ENCODE measurements at regions of chr19 and their contacts with region 1.

Region 1: GRCh38 chr19:8412783-8413628 is at the start of gene MARCHF2:
- DNase-seq: peak; percentile 99
- ATAC-seq: peak; percentile 100
- H3K4me3 ChIP-seq: peak within 1 kb of the TSS; percentile 79
- H3K27ac ChIP-seq: no peak within 1 kb of the TSS
- H3K4me1 ChIP-seq: peaks cover 6% of the 10 kb centered on the region
- H3K27me3 ChIP-seq: no peaks in the 10 kb centered on the region
- CTCF ChIP-seq: peak; percentile 68
- total RNA-seq, gene MARCHF2: 58.6 and 58.7 TPM in 2 replicates

Region 2: DNA sequence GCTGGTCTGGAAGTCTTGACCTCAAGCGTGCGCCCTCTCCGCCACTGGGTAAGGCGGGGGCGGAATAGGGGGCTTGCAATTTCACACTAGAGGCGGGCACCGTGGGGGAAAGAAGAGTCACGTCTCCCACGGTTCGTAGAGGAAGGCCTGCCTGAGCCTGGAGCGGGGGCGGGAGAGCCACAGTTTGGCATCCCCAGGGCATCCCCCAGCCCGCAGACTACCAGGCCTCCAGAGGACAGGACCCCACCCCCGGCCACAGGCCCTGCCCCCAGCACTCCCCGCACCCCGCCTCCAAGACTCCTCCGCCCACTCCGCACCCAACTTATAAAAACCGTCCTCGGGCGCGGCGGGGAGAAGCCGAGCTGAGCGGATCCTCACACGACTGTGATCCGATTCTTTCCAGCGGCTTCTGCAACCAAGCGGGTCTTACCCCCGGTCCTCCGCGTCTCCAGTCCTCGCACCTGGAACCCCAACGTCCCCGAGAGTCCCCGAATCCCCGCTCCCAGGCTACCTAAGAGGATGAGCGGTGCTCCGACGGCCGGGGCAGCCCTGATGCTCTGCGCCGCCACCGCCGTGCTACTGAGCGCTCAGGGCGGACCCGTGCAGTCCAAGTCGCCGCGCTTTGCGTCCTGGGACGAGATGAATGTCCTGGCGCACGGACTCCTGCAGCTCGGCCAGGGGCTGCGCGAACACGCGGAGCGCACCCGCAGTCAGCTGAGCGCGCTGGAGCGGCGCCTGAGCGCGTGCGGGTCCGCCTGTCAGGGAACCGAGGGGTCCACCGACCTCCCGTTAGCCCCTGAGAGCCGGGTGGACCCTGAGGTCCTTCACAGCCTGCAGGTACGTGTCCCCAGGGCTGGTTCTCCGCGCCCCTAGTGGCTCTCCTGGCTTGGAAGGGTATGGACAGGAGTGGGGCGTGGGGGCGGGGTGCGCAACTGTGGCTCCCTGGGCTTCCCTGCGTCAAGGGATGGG is 48.9 kb before region 1 on chr19 and contains the start of gene ANGPTL4:
- CTCF ChIA-PET with region 1: no interaction called
- POLR2A ChIA-PET with region 1: interaction called, 15 read pairs
- intact Hi-C with region 1: no loop called
- DNase-seq: peak; percentile 79
- ATAC-seq: peak; percentile 52
- H3K4me3 ChIP-seq: peak within 1 kb of the TSS; percentile 84
- H3K27ac ChIP-seq: peak within 1 kb of the TSS; percentile 35
- H3K4me1 ChIP-seq: peaks cover 40% of the 10 kb centered on the region
- H3K27me3 ChIP-seq: no peaks in the 10 kb centered on the region
- CTCF ChIP-seq: peak; percentile 44
- total RNA-seq, gene ANGPTL4: 6.7 and 10.7 TPM in 2 replicates

Region 3: GRCh38 chr19:8444645-8445487 is 31.9 kb after region 1 on chr19 and contains the start of gene HNRNPM:
- CTCF ChIA-PET with region 1: interaction called, 12 read pairs
- POLR2A ChIA-PET with region 1: interaction called, 10 read pairs
- intact Hi-C with region 1: no loop called
- DNase-seq: peak; percentile 100
- ATAC-seq: peak; percentile 88
- H3K4me3 ChIP-seq: peak within 1 kb of the TSS; percentile 88
- H3K27ac ChIP-seq: peak within 1 kb of the TSS; percentile 63
- H3K4me1 ChIP-seq: peaks cover 30% of the 10 kb centered on the region
- H3K27me3 ChIP-seq: no peaks in the 10 kb centered on the region
- CTCF ChIP-seq: no peak
- total RNA-seq, gene HNRNPM: 165 and 287 TPM in 2 replicates

Region 4: GRCh38 chr19:8468761-8469373 is 55.9 kb after region 1 on chr19:
- CTCF ChIA-PET with region 1: no interaction called
- POLR2A ChIA-PET with region 1: no interaction called
- intact Hi-C with region 1: no loop called
- DNase-seq: no peak
- ATAC-seq: no peak
- H3K4me3 ChIP-seq: no peak overlapping the region
- H3K27ac ChIP-seq: no peak overlapping the region
- H3K4me1 ChIP-seq: no peaks in the 10 kb centered on the region
- H3K27me3 ChIP-seq: no peaks in the 10 kb centered on the region
- CTCF ChIP-seq: no peak

Region 5: GRCh38 chr19:8487137-8487851 is 74.3 kb after region 1 on chr19:
- CTCF ChIA-PET with region 1: no interaction called
- POLR2A ChIA-PET with region 1: no interaction called
- intact Hi-C with region 1: no loop called
- DNase-seq: no peak
- ATAC-seq: no peak
- H3K4me3 ChIP-seq: no peak overlapping the region
- H3K27ac ChIP-seq: no peak overlapping the region
- H3K4me1 ChIP-seq: no peaks in the 10 kb centered on the region
- H3K27me3 ChIP-seq: no peaks in the 10 kb centered on the region
- CTCF ChIP-seq: no peak

Region 6: GRCh38 chr19:8505680-8506401 is 92.8 kb after region 1 on chr19:
- CTCF ChIA-PET with region 1: interaction called, 15 read pairs
- POLR2A ChIA-PET with region 1: interaction called, 4 read pairs
- intact Hi-C with region 1: loop called (anchors 2 kb)
- DNase-seq: peak; percentile 87
- ATAC-seq: peak; percentile 90
- H3K4me3 ChIP-seq: peak overlapping the region; percentile 76
- H3K27ac ChIP-seq: peak overlapping the region; percentile 1; the same call in 1 of the 2 replicates
- H3K4me1 ChIP-seq: no peaks in the 10 kb centered on the region
- H3K27me3 ChIP-seq: no peaks in the 10 kb centered on the region
- CTCF ChIP-seq: peak; percentile 99